K562 (cell line): ENCODE measurements at regions of chr1 and their contacts with region 1.

Region 1: GRCh38 chr1:147389532-147390524 is 147.3 kb downstream of the CHD1L start:
- DNase-seq: peak; percentile 47 to 66 (median 56)
- ATAC-seq: peak; percentile 96
- H3K4me3 ChIP-seq: no peak overlapping the region
- H3K27ac ChIP-seq: no peak overlapping the region
- H3K4me1 ChIP-seq: peaks cover 0 to 9% of the 10 kb centered on the region in 2 experiments; a peak in 2 of 5 replicates
- H3K27me3 ChIP-seq: no peaks in the 10 kb centered on the region
- CTCF ChIP-seq: peak; percentile 73 to 83 (median 78)
- EP300 ChIP-seq: no peak
- POLR2A ChIP-seq: no peak
- RAD21 ChIP-seq: peak; percentile 86 to 95

Region 2: DNA sequence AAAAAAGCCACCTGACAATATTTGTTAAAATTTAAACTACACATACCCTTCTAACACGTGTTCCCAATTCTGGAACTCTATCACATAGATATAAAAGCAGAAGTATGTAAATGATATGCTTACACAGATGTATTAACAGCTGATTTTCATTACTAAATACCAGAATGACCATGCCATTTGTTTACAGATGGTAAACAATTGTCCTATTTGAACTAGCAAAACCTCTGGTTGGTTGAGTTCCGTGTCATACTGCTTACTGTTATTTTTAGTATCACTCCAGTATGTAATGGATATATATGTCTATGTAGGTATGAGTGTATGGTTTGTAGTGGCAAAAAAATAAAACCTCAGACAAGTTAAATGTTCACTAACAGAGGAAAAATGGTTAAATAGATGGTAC is 76.6 kb before region 1 on chr1:
- CTCF ChIA-PET with region 1: no interaction called
- POLR2A ChIA-PET with region 1: no interaction called
- in situ Hi-C with region 1: no loop called
- intact Hi-C with region 1: loop called (anchors 10 kb)
- DNase-seq: no peak
- ATAC-seq: no peak
- H3K4me3 ChIP-seq: no peak overlapping the region
- H3K27ac ChIP-seq: no peak overlapping the region
- H3K4me1 ChIP-seq: no peaks in the 10 kb centered on the region
- H3K27me3 ChIP-seq: no peaks in the 10 kb centered on the region
- CTCF ChIP-seq: no peak
- EP300 ChIP-seq: no peak
- POLR2A ChIP-seq: no peak
- RAD21 ChIP-seq: no peak

Region 3: DNA sequence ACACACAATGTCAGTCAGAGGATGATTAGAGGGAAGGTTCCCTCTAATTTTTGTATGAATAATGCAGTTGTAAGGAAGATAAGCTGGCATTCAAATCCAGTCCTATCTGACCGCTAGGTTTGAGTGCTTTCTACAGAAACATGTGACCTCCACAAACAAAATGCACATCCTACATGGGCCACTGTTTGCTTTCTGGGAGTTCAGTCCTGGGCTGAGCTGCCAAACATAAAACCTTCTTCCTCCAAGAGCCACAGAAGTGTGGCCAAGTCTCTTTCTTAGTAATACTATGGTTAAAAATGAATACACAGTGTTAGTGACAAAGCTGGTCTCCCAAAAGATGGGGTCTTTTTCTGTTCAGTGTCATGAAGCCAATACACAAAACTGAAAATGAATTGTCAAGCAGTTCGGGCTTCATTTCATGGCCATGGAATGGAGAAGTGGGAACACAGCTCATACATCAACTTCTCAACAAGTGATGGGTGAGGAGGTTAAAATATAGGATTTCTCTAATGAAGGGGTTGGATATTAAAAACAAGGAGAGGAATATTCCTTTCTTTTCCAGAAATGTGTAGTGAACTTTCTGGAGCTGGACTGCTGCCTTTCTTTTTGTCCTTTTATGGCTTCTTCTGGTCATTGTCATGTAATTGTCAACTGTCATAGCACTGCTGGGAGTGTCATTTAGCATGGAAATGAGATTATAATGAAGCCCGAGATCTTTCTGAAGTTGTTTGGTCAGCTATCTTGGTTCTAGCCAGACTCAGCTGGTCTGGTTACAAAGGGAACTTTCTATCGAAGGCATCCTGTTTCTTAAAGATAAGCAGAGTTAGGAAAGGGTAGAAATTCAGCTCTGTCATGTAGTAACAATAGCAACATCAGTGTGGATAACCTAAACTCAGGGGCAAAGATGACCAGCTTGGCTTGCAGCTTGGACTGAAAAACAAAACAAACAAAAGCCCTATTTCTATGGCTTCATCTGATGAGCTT is 12.3 kb before region 1 on chr1:
- CTCF ChIA-PET with region 1: no interaction called
- POLR2A ChIA-PET with region 1: interaction called, 17 read pairs
- in situ Hi-C with region 1: no loop called
- intact Hi-C with region 1: no loop called
- DNase-seq: peak; percentile 62 to 92 (median 74)
- ATAC-seq: peak; percentile 94
- H3K4me3 ChIP-seq: no peak overlapping the region
- H3K27ac ChIP-seq: peak overlapping the region; percentile 97
- H3K4me1 ChIP-seq: peaks cover 10 to 34% of the 10 kb centered on the region in 2 experiments; a peak in 4 of 5 replicates
- H3K27me3 ChIP-seq: no peaks in the 10 kb centered on the region
- CTCF ChIP-seq: no peak
- EP300 ChIP-seq: peak; percentile 94
- POLR2A ChIP-seq: peak; percentile 44; the same call in 1 of the 2 replicates
- RAD21 ChIP-seq: no peak